ENCODE measurements at regions of chr2 and their contacts with region 1.

Region 1: GRCh38 chr2:148644883-148645538 is 460 bp downstream of the EPC2 start:
- DNase-seq: peak; percentile 74

Region 2: GRCh38 chr2:148634749-148635148 is 10.3 kb before region 1 on chr2:
- CTCF ChIA-PET with region 1: no interaction called
- POLR2A ChIA-PET with region 1: no interaction called
- DNase-seq: no peak

Region 3: DNA sequence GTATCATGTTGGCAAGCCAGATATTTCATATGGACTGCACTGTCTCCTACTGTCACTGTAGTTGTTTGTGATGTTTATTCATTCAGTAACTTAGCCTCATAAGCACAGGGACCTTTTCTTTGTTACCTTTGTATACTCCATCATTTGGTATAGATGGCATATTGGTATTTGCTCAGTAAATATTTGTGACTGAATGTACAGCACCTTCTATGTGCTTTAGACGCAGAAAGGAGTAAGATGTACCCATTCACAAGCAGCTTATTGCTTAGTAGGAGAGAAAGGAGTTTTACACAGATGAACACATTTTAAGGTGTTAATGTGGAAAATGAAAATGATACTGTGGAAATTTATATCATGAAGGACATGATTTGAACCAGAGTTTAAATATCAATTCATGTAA is 11.5 kb after region 1 on chr2:
- CTCF ChIA-PET with region 1: no interaction called
- POLR2A ChIA-PET with region 1: interaction called, 10 read pairs
- DNase-seq: no peak

Measured in HEK293T (cell line).